Adrenal gland (tissue), 19 donors: ENCODE measurements at regions of chr19 and their contacts with region 1.

Region 1: GRCh38 chr19:48110350-48110966 is at the start of gene PLA2G4C:
- DNase-seq: peak; percentile 91 to 97 (median 94)
- H3K4me3 ChIP-seq: peak within 1 kb of the TSS in 2 of 4 donors; percentile 33 to 47
- H3K27ac ChIP-seq: peak within 1 kb of the TSS; percentile 86 to 99 (median 93)
- H3K4me1 ChIP-seq: peaks cover 6 to 21% of the 10 kb centered on the region in 2 donors
- H3K27me3 ChIP-seq: no peaks in the 10 kb centered on the region
- CTCF ChIP-seq: peak in 1 of 6 experiments; percentile 12
- POLR2A ChIP-seq: peak; percentile 84 to 93
- total RNA-seq, gene PLA2G4C: 18.6 to 122 (median 51.6) TPM

Region 2: GRCh38 chr19:48152551-48152950 is 42.1 kb after region 1 on chr19:
- intact Hi-C with region 1: loop called (anchors 2 kb)
- DNase-seq: peak; percentile 40 to 91 (median 62)
- H3K4me3 ChIP-seq: no peak overlapping the region
- H3K27ac ChIP-seq: no peak overlapping the region
- H3K4me1 ChIP-seq: no peaks in the 10 kb centered on the region
- H3K27me3 ChIP-seq: no peaks in the 10 kb centered on the region
- CTCF ChIP-seq: peak; percentile 81 to 93 (median 88)
- POLR2A ChIP-seq: no peak